Calu3 (cell line): ENCODE measurements at regions of chr2 and their contacts with region 1.

Region 1: GRCh38 chr2:70142590-70143313 is 48.1 kb downstream of the C2orf42 start:
- DNase-seq: peak; percentile 99
- H3K4me3 Mint-ChIP-seq: peak overlapping the region; percentile 60
- H3K27ac Mint-ChIP-seq: peak overlapping the region; percentile 97
- H3K4me1 Mint-ChIP-seq: peaks cover 22% of the 10 kb centered on the region
- H3K27me3 Mint-ChIP-seq: no peaks in the 10 kb centered on the region
- CTCF ChIP-seq: peak; percentile 90

Region 2: DNA sequence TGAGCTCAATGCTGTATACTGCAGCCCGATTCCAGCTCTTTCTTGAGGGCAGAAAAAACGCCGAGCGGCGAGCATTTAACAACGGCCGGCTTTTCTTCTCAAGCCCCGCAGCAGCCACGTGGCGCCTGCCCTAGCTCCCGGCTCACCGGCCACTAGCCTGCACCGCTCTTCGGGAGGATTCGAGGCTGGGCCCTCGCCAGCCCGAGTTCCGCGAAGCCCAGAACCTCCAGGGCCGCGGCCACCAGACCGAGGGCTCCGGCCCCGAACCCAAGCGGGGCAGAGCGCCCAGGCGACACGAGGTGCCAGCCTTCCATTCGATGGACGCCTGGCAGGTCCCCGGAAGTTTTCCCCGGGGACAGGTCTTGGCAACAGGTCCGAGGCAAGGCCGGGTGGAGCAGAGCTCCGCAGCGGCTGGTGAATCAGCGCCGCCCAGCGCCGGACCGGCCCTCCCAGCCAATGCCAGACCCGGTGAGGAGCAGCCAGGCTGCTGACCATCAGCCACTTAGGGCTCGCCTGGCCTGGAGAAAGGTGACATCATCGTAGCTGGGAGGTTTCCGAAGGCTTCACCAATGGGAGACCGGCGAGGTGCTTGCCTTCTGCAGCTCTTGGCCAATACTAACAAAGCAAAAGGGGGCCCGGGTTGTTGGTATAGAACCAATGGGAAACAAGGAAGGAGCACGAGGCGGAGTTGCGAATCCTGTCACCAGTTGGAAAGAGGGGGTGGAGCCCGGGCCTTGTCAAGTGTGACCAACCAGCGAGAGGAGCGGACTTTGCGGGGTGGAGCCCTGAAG is 228.4 kb before region 1 on chr2:
- CTCF ChIA-PET with region 1: interaction called, 32 read pairs
- intact Hi-C with region 1: loop called (anchors 2 kb)
- DNase-seq: peak; percentile 99
- H3K4me3 Mint-ChIP-seq: peak overlapping the region; percentile 76
- H3K27ac Mint-ChIP-seq: peak overlapping the region; percentile 98
- H3K4me1 Mint-ChIP-seq: peaks cover 27% of the 10 kb centered on the region
- H3K27me3 Mint-ChIP-seq: no peaks in the 10 kb centered on the region
- CTCF ChIP-seq: no peak

Region 3: GRCh38 chr2:69997015-69997830 is 145.5 kb before region 1 on chr2:
- CTCF ChIA-PET with region 1: no interaction called
- intact Hi-C with region 1: loop called (anchors 10 kb)
- DNase-seq: peak; percentile 6
- H3K4me3 Mint-ChIP-seq: no peak overlapping the region
- H3K27ac Mint-ChIP-seq: no peak overlapping the region
- H3K4me1 Mint-ChIP-seq: peaks cover 17% of the 10 kb centered on the region
- H3K27me3 Mint-ChIP-seq: no peaks in the 10 kb centered on the region
- CTCF ChIP-seq: no peak

Region 4: DNA sequence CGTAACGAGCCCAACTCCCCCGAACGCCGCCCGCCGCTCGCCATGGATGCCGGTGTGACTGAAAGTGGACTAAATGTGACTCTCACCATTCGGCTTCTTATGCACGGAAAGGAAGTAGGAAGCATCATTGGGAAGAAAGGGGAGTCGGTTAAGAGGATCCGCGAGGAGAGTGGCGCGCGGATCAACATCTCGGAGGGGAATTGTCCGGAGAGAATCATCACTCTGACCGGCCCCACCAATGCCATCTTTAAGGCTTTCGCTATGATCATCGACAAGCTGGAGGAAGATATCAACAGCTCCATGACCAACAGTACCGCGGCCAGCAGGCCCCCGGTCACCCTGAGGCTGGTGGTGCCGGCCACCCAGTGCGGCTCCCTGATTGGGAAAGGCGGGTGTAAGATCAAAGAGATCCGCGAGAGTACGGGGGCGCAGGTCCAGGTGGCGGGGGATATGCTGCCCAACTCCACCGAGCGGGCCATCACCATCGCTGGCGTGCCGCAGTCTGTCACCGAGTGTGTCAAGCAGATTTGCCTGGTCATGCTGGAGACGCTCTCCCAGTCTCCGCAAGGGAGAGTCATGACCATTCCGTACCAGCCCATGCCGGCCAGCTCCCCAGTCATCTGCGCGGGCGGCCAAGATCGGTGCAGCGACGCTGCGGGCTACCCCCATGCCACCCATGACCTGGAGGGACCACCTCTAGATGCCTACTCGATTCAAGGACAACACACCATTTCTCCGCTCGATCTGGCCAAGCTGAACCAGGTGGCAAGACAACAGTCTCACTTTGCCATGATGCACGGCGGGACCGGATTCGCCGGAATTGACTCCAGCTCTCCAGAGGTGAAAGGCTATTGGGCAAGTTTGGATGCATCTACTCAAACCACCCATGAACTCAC is 54.8 kb before region 1 on chr2:
- CTCF ChIA-PET with region 1: no interaction called
- intact Hi-C with region 1: loop called (anchors 1 kb)
- DNase-seq: peak; percentile 60
- H3K4me3 Mint-ChIP-seq: peak overlapping the region; percentile 93
- H3K27ac Mint-ChIP-seq: peak overlapping the region; percentile 100
- H3K4me1 Mint-ChIP-seq: peaks cover 36% of the 10 kb centered on the region
- H3K27me3 Mint-ChIP-seq: no peaks in the 10 kb centered on the region
- CTCF ChIP-seq: no peak

Region 5: GRCh38 chr2:70115646-70116442 is 26.9 kb before region 1 on chr2:
- CTCF ChIA-PET with region 1: no interaction called
- intact Hi-C with region 1: no loop called
- DNase-seq: no peak
- H3K4me3 Mint-ChIP-seq: no peak overlapping the region
- H3K27ac Mint-ChIP-seq: no peak overlapping the region
- H3K4me1 Mint-ChIP-seq: peaks cover 34% of the 10 kb centered on the region
- H3K27me3 Mint-ChIP-seq: no peaks in the 10 kb centered on the region
- CTCF ChIP-seq: no peak

Region 6: GRCh38 chr2:70132244-70133126 is 10.3 kb before region 1 on chr2:
- CTCF ChIA-PET with region 1: interaction called, 10 read pairs
- intact Hi-C with region 1: no loop called
- DNase-seq: peak; percentile 21
- H3K4me3 Mint-ChIP-seq: peak overlapping the region; percentile 59
- H3K27ac Mint-ChIP-seq: peak overlapping the region; percentile 81
- H3K4me1 Mint-ChIP-seq: peaks cover 46% of the 10 kb centered on the region
- H3K27me3 Mint-ChIP-seq: no peaks in the 10 kb centered on the region
- CTCF ChIP-seq: no peak

Region 7: DNA sequence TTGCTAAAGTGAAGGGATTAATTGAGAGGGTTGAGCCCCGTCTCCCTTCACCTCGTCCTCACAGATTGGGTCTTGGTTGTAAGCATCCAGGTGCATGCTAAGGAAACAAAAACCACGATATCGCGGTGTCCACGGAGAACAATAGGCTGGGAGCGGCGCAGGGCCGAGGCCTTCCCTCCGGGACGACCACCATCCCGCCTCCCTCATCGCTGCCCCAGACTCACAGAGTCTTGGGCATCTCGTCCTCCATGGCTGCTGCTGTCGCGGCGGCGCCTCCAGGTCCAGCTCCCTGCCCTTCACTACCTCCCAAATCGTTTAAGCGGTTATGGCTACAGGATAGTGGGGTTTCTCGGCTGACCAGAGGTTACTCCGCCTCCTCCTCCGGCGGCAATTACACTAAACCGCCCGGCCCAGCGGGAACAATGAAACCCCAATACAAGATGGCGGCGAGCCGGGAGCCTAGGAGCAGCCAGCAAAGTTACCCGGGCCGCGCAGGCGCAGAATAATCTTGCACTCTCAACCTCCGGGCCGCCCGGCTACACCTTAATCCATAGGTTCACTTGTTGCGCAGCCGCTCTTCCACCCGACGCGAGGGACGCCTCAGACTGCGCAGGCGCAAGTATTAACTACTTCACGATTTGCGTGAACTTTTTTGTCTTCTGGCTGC is 105.6 kb after region 1 on chr2 and contains the start of gene TIA1:
- CTCF ChIA-PET with region 1: no interaction called
- intact Hi-C with region 1: no loop called
- DNase-seq: peak; percentile 97
- H3K4me3 Mint-ChIP-seq: peak within 1 kb of the TSS; percentile 79
- H3K27ac Mint-ChIP-seq: peak within 1 kb of the TSS; percentile 92
- H3K4me1 Mint-ChIP-seq: peaks cover 20% of the 10 kb centered on the region
- H3K27me3 Mint-ChIP-seq: no peaks in the 10 kb centered on the region
- CTCF ChIP-seq: no peak
- total RNA-seq, gene TIA1: 127 and 130 TPM in 2 replicates